Right cardiac atrium (tissue), 5 donors: ENCODE measurements at regions of chr2 and their contacts with region 1.

Region 1: GRCh38 chr2:172813314-172813888 is 77.8 kb downstream of the RAPGEF4 start:
- DNase-seq: no peak
- ATAC-seq: peak in 1 of 2 donors; percentile 76
- H3K4me3 ChIP-seq: no peak overlapping the region
- H3K27ac ChIP-seq: no peak overlapping the region
- H3K4me1 ChIP-seq: no peaks in the 10 kb centered on the region
- H3K27me3 ChIP-seq: no peaks in the 10 kb centered on the region

Region 2: GRCh38 chr2:172484253-172484652 is 329.1 kb before region 1 on chr2:
- intact Hi-C with region 1: no loop called
- DNase-seq: no peak
- ATAC-seq: no peak
- H3K4me3 ChIP-seq: no peak overlapping the region
- H3K27ac ChIP-seq: no peak overlapping the region
- H3K4me1 ChIP-seq: peaks cover 3% of the 10 kb centered on the region
- H3K27me3 ChIP-seq: no peaks in the 10 kb centered on the region

Region 3: GRCh38 chr2:172888714-172889669 is 75.6 kb after region 1 on chr2:
- intact Hi-C with region 1: no loop called
- DNase-seq: no peak
- ATAC-seq: no peak
- H3K4me3 ChIP-seq: no peak overlapping the region
- H3K27ac ChIP-seq: no peak overlapping the region
- H3K4me1 ChIP-seq: peaks cover 5% of the 10 kb centered on the region
- H3K27me3 ChIP-seq: no peaks in the 10 kb centered on the region

Region 4: GRCh38 chr2:172995323-172996244 is 182.2 kb after region 1 on chr2:
- intact Hi-C with region 1: no loop called
- DNase-seq: peak in 2 of 3 donors; percentile 24 to 62
- ATAC-seq: peak; percentile 68 to 89
- H3K4me3 ChIP-seq: no peak overlapping the region
- H3K27ac ChIP-seq: no peak overlapping the region
- H3K4me1 ChIP-seq: peaks cover 2% of the 10 kb centered on the region
- H3K27me3 ChIP-seq: no peaks in the 10 kb centered on the region

Region 5: DNA sequence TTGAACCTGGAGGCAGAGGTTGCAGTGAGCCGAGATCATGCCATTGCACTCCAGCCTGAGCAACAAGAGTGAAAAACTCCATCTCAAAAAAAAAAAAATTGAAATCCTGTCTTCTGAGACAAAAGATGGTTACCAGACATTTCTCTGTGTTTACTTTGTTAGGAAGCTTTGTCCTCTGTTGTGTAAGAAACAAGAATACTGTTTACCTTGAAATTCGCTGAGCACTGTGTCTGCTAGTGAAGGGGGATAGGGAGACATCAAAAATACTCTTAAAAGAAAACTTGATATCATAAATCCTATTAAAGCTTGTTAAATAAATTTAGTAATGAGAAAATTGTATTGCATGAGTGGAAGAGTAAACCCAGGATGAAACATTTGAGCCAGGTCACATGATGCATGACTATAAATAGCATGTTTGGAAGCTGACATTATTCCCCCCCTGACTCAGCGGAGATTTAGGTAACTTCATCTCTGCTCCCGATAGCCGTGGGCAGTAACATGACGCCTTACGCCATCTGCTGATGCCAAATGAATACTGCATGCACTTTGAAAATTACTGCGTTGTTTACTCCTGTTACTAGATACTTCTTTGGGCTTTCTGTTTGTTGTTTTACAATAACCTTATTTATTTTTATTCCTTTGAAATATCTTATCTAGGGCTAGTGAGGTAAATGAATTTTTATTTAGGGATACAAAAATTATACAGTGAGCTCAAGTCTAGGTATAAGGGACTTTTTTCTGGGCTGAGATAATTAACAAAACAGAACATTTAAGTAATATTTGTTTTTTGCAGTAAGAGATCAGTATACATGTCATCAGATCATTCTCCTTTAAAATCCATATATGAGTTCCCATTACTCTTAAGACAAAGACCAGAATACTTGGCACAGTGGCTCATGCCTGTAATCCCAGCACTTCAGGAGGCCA is 397.1 kb after region 1 on chr2:
- intact Hi-C with region 1: loop called in 1 of 4 experiments (anchors 10 kb)
- DNase-seq: peak in 2 of 3 donors; percentile 55 to 70
- ATAC-seq: peak; percentile 91 to 93
- H3K4me3 ChIP-seq: no peak overlapping the region
- H3K27ac ChIP-seq: no peak overlapping the region
- H3K4me1 ChIP-seq: no peaks in the 10 kb centered on the region
- H3K27me3 ChIP-seq: no peaks in the 10 kb centered on the region